Esophagus muscularis mucosa (tissue), 4 donors: ENCODE measurements at regions of chr22 and their contacts with region 1.

Region 1: DNA sequence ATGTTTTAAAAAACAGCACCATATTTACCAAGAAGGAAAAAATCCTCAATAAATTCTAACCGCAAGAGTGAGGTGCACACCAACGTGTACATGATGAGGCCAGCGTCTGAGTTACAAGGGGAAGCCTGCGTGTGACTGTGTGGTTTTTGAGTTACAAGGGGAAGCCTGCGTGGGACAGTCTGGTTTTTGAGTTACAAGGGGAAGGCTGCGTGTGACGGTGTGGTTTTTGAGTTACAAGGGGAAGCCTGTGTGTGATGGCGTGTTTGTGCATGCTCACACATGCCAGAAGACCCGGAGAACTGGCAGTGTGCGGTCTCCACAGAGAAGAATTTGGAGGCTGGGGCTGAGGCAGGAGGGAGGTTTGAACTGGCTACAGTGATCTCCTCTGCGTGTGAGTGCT is 1376.4 kb downstream of the TBC1D22A start:
- DNase-seq: no peak
- H3K4me3 ChIP-seq: no peak overlapping the region
- H3K27ac ChIP-seq: no peak overlapping the region
- H3K4me1 ChIP-seq: no peaks in the 10 kb centered on the region
- H3K27me3 ChIP-seq: peaks cover 0 to 11% (median 0%) of the 10 kb centered on the region in 4 donors
- CTCF ChIP-seq: no peak
- EP300 ChIP-seq: no peak
- POLR2A ChIP-seq: no peak

Region 2: DNA sequence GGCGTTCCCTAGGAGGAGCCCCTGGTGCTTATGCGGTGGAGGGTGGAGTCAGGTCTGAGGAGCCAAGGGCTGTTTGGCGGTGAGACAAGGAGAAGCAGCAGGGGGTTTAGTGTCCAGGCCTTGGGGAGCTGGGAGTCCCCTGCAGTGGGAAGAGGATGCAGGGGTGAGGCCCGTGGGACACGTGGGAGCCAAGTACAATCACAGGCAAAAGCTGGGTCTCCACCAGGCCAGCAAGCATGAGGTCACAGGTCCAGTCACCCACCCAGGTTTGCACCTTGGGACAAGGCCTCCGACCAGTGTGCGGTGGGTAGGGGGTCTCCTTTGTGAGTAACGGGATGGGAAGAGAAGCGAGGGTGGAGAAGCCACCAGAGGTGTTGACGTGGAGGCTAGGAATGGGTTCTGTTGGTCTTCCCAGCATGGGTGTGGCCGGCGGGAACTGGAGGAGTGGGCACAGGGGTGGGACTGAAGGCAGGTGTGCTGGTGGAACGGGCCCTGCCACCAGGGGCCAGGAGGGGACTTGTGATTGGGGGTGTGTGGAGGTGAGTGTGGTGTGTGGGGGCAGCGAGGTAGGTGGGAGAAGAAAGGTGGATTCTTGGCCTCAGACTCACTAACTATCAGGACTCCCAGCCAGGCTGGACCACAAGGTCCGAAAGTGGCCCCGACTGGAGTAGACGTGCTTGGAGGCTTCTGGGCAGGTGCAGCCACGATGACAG is 422.8 kb before region 1 on chr22:
- intact Hi-C with region 1: no loop called
- DNase-seq: peak; percentile 75
- H3K4me3 ChIP-seq: no peak overlapping the region
- H3K27ac ChIP-seq: no peak overlapping the region
- H3K4me1 ChIP-seq: no peaks in the 10 kb centered on the region
- H3K27me3 ChIP-seq: peaks cover 0 to 77% (median 0%) of the 10 kb centered on the region in 4 donors
- CTCF ChIP-seq: no peak
- EP300 ChIP-seq: no peak
- POLR2A ChIP-seq: no peak

Region 3: GRCh38 chr22:47996446-47996857 is 142.4 kb before region 1 on chr22:
- intact Hi-C with region 1: no loop called
- DNase-seq: no peak
- H3K4me3 ChIP-seq: no peak overlapping the region
- H3K27ac ChIP-seq: no peak overlapping the region
- H3K4me1 ChIP-seq: no peaks in the 10 kb centered on the region
- H3K27me3 ChIP-seq: peaks cover 0 to 6% (median 0%) of the 10 kb centered on the region in 4 donors
- CTCF ChIP-seq: no peak
- EP300 ChIP-seq: no peak
- POLR2A ChIP-seq: no peak

Region 4: GRCh38 chr22:48076026-48076425 is 62.8 kb before region 1 on chr22:
- intact Hi-C with region 1: no loop called
- DNase-seq: no peak
- H3K4me3 ChIP-seq: no peak overlapping the region
- H3K27ac ChIP-seq: no peak overlapping the region
- H3K4me1 ChIP-seq: no peaks in the 10 kb centered on the region
- H3K27me3 ChIP-seq: peaks cover 0 to 28% (median 0%) of the 10 kb centered on the region in 4 donors
- CTCF ChIP-seq: no peak
- EP300 ChIP-seq: no peak
- POLR2A ChIP-seq: no peak

Region 5: DNA sequence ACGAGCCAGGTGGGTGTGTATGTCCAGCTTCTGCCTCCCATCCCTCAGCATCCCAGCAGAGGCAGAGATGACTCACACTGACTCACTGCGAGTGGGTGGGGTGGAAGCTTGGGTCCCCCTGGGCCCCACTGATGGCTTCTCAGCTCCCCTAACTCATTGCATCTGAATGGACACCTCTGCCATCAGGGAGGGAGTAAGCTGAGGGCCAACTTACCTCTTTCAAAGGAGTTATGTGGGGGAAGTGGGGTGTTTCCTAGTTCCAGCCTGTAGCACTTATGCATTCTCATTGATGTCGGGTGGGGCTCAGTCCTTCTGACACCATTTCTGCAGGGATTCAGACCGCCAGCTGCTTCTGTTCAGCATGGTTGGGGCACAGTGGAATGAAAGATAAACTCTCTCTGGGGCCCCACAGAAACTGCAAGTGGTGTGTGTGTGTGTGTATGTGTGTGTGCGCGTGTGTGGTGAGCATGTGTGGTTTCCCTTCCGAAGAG is 49.4 kb after region 1 on chr22:
- intact Hi-C with region 1: loop called (anchors 5 kb)
- DNase-seq: no peak
- H3K4me3 ChIP-seq: no peak overlapping the region
- H3K27ac ChIP-seq: no peak overlapping the region
- H3K4me1 ChIP-seq: no peaks in the 10 kb centered on the region
- H3K27me3 ChIP-seq: peaks cover 0 to 4% (median 0%) of the 10 kb centered on the region in 4 donors
- CTCF ChIP-seq: no peak
- EP300 ChIP-seq: no peak
- POLR2A ChIP-seq: no peak